ENCODE measurements at regions of chr19 and their contacts with region 1.

Region 1: GRCh38 chr19:18322759-18323460 is at the start of gene LSM4:
- DNase-seq: peak; percentile 99
- ATAC-seq: peak; percentile 94
- H3K4me3 Mint-ChIP-seq: peak within 1 kb of the TSS; percentile 94
- H3K27ac Mint-ChIP-seq: peak within 1 kb of the TSS; percentile 97
- H3K4me1 Mint-ChIP-seq: peaks cover 46% of the 10 kb centered on the region
- H3K27me3 Mint-ChIP-seq: no peaks in the 10 kb centered on the region
- total RNA-seq, gene LSM4: 151 to 157 TPM

Region 2: DNA sequence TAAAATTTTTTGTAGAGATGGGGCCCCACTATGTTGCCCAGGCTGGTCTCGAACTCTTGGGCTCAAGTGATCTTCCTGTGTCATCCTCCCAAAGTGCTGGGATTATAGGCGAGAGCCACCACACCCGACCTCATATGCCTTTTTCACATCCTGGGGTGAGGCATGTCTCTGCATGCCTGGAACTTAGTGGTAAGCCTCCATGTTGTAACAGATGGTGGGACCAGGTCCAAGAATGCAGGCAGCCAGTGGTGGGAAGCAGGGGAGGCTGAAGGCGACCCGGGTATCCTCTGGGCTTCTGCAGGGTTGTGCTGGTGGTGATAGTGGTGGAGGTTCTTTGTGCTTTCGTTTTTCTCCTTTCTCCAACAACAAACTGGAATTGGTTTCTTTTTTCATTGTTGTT is 420.2 kb before region 1 on chr19:
- POLR2A ChIA-PET with region 1: no interaction called
- DNase-seq: no peak
- ATAC-seq: no peak
- H3K4me3 Mint-ChIP-seq: no peak overlapping the region
- H3K27ac Mint-ChIP-seq: no peak overlapping the region
- H3K4me1 Mint-ChIP-seq: no peaks in the 10 kb centered on the region
- H3K27me3 Mint-ChIP-seq: peaks cover 17% of the 10 kb centered on the region

Region 3: DNA sequence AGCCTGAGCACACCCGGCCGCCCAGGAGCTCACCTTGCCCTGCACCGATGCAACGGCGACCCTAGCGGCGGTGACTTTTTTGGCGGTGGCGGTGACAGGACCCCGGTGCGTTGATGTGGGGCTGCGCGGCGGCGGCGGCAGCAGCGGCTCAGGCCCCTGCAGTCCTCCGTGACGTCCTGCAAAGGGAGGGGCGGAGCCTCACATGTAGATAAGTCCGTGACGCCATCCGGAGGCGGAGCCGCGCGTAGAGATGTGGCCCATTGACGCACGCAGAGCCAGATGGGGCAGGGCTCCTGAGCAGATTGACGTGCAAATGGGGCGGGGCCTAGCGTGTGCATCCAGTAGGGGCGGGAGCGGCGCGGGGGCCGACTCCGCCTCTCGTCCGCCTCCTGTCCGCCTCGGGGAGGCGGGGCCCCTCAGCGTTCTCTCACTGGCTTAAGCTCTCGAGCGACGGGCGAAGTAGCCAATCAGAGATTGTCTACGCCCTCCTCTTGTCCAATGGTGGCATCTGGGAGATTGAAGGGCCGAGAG is 119.0 kb before region 1 on chr19 and contains the start of gene RAB3A:
- POLR2A ChIA-PET with region 1: interaction called, 12 read pairs
- DNase-seq: peak; percentile 98
- ATAC-seq: peak; percentile 92
- H3K4me3 Mint-ChIP-seq: peak within 1 kb of the TSS; percentile 93
- H3K27ac Mint-ChIP-seq: peak within 1 kb of the TSS; percentile 93
- H3K4me1 Mint-ChIP-seq: peaks cover 11% of the 10 kb centered on the region
- H3K27me3 Mint-ChIP-seq: peaks cover 10% of the 10 kb centered on the region
- total RNA-seq, gene RAB3A: 3.0 to 6.1 TPM

Region 4: GRCh38 chr19:18291590-18292461 is 31.1 kb before region 1 on chr19:
- POLR2A ChIA-PET with region 1: interaction called, 144 read pairs
- DNase-seq: peak; percentile 87
- ATAC-seq: peak; percentile 40
- H3K4me3 Mint-ChIP-seq: peak overlapping the region; percentile 94
- H3K27ac Mint-ChIP-seq: peak overlapping the region; percentile 91
- H3K4me1 Mint-ChIP-seq: peaks cover 52% of the 10 kb centered on the region
- H3K27me3 Mint-ChIP-seq: no peaks in the 10 kb centered on the region

Region 5: DNA sequence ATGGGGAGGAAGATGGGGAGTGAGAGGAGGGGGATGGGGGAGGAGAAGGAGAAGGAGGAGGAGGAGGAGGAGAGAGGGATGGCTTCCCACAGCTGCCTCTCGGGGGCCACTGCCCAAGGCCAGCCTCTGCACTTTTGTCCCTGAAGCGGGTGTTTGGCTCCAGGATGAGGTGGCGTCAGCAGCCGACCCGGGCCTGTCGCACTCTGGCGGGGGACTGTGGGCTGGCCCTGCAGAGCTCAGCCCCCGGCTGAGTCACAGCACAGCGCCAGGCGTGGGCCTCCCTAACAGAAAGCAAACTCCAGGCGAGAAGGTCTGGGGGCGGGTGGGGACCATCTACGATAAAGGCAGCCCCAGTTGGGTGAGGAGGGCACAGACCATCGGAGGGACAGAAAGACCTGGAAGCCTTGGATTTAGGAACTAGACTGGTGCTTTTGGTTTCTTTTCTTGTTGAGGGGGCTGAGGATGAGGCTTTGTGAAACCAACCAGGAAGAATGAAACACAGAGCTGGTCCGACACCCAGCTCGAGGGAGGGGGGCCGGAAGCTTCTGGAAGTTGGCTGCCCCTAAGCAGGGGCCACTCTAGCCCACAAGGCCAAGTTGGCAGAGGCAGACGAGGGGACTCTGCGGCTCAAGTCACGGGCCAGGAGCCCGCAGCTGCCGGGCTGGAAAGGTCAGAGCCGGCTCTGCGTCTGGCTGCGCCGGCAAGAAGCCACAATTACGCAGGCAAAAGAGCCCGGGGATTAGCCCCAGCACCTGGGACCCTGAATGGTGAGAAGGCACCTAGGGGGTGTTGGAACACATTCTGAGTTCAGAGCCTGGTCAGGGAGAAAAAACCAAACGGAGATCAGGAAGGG is 18.2 kb before region 1 on chr19:
- POLR2A ChIA-PET with region 1: interaction called, 248 read pairs
- DNase-seq: peak; percentile 82
- ATAC-seq: peak; percentile 75
- H3K4me3 Mint-ChIP-seq: peak overlapping the region; percentile 90
- H3K27ac Mint-ChIP-seq: peak overlapping the region; percentile 93
- H3K4me1 Mint-ChIP-seq: peaks cover 29% of the 10 kb centered on the region
- H3K27me3 Mint-ChIP-seq: no peaks in the 10 kb centered on the region

Region 6: GRCh38 chr19:18340190-18340989 is 17.5 kb after region 1 on chr19 and contains the start of gene PGPEP1:
- POLR2A ChIA-PET with region 1: interaction called, 10 read pairs
- DNase-seq: peak; percentile 83
- ATAC-seq: peak; percentile 48
- H3K4me3 Mint-ChIP-seq: peak within 1 kb of the TSS; percentile 80
- H3K27ac Mint-ChIP-seq: peak within 1 kb of the TSS; percentile 83
- H3K4me1 Mint-ChIP-seq: peaks cover 14% of the 10 kb centered on the region
- H3K27me3 Mint-ChIP-seq: no peaks in the 10 kb centered on the region
- total RNA-seq, gene PGPEP1: 41.3 to 45.7 TPM

Region 7: GRCh38 chr19:18419195-18419698 is 96.3 kb after region 1 on chr19 and contains the start of gene SSBP4:
- POLR2A ChIA-PET with region 1: interaction called, 18 read pairs
- DNase-seq: peak; percentile 93
- ATAC-seq: peak; percentile 27
- H3K4me3 Mint-ChIP-seq: peak within 1 kb of the TSS; percentile 99
- H3K27ac Mint-ChIP-seq: peak within 1 kb of the TSS; percentile 93
- H3K4me1 Mint-ChIP-seq: peaks cover 68% of the 10 kb centered on the region
- H3K27me3 Mint-ChIP-seq: no peaks in the 10 kb centered on the region
- total RNA-seq, gene SSBP4: 152 to 158 TPM

Measured in activated naive CD8-positive, alpha-beta T cell treated with anti-CD3 and anti-CD28 coated beads, Interleukin-2, amount 10 ng/mL, durations not matched to agents 7 days and 5 days (primary cell).